ENCODE measurements at regions of chr17 and their contacts with region 1.

Region 1: DNA sequence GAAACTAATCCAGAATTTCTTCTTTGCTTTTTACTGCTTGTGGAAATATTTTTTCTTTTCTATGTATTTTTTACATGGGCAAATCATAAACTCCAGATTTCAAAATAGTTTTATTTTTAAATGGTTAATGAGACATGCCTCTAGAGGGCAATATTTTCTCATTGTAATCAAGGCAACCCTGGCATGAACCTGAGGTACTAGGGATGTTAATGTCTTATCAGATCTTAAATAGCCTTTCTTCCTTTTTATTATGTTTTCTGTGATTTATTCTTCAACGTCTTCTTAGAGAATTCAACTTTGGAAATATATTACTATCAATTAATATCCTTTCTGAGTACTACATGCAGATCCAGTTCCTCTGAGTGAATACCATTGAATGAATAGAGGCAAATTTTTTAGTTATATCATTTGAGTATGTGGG is 324.7 kb downstream of the BCAS3 start:
- DNase-seq: no peak
- H3K4me3 ChIP-seq: no peak overlapping the region
- H3K27ac ChIP-seq: no peak overlapping the region
- H3K4me1 ChIP-seq: no peaks in the 10 kb centered on the region
- H3K27me3 ChIP-seq: no peaks in the 10 kb centered on the region
- CTCF ChIP-seq: peak; percentile 53

Region 2: DNA sequence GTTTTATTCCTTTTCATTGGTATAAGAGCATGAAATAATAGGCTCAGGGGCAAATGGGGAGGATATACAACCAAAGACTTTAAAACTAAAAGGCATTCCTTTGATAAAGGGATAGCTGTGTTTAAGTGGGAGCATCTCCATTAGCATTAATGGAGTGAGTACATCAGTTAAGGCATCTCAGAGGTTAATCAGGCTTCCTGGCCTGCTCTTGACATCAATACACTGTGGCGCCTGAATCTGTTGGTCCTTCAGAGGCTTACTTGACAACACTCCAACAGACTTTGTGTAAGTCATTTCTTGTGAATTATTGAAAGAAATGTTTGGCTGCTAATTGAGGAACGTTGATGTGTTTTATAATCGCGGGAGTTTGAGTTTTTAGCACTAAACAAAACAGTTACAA is 94.0 kb before region 1 on chr17:
- intact Hi-C with region 1: no loop called
- DNase-seq: no peak
- H3K4me3 ChIP-seq: no peak overlapping the region
- H3K27ac ChIP-seq: no peak overlapping the region
- H3K4me1 ChIP-seq: no peaks in the 10 kb centered on the region
- H3K27me3 ChIP-seq: no peaks in the 10 kb centered on the region
- CTCF ChIP-seq: no peak

Region 3: DNA sequence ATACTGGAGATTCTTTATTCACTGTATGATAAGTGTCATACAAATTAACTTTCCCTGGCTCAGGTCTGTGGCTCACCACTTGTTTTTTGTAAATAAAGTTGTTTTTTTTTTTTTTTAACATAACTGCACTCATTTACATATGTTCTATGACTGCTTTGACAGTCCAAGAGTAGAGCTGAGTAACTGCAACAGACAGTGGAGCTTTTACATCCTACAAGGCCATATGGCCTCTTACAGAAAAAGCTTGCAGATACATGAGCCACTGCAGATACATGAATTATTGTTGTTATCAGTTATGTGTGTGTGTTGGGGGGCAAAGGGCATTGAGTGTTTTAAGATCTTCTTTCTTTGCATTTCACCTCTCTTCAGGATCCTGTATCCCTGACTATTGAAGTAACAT is 12.9 kb before region 1 on chr17:
- intact Hi-C with region 1: no loop called
- DNase-seq: no peak
- H3K4me3 ChIP-seq: no peak overlapping the region
- H3K27ac ChIP-seq: no peak overlapping the region
- H3K4me1 ChIP-seq: no peaks in the 10 kb centered on the region
- H3K27me3 ChIP-seq: no peaks in the 10 kb centered on the region
- CTCF ChIP-seq: no peak

Region 4: GRCh38 chr17:61389670-61390478 is 387.5 kb after region 1 on chr17:
- intact Hi-C with region 1: loop called (anchors 5 kb)
- DNase-seq: no peak
- H3K4me3 ChIP-seq: no peak overlapping the region
- H3K27ac ChIP-seq: no peak overlapping the region
- H3K4me1 ChIP-seq: no peaks in the 10 kb centered on the region
- H3K27me3 ChIP-seq: no peaks in the 10 kb centered on the region
- CTCF ChIP-seq: peak; percentile 83

Region 5: GRCh38 chr17:61412143-61412859 is 410.0 kb after region 1 on chr17:
- intact Hi-C with region 1: no loop called
- DNase-seq: peak; percentile 79
- H3K4me3 ChIP-seq: peak overlapping the region; percentile 49
- H3K27ac ChIP-seq: peak overlapping the region; percentile 68
- H3K4me1 ChIP-seq: peaks cover 5% of the 10 kb centered on the region
- H3K27me3 ChIP-seq: peaks cover 45% of the 10 kb centered on the region
- CTCF ChIP-seq: peak; percentile 97